PC-3 (cell line): ENCODE measurements at regions of chr7 and their contacts with region 1.

Region 1: DNA sequence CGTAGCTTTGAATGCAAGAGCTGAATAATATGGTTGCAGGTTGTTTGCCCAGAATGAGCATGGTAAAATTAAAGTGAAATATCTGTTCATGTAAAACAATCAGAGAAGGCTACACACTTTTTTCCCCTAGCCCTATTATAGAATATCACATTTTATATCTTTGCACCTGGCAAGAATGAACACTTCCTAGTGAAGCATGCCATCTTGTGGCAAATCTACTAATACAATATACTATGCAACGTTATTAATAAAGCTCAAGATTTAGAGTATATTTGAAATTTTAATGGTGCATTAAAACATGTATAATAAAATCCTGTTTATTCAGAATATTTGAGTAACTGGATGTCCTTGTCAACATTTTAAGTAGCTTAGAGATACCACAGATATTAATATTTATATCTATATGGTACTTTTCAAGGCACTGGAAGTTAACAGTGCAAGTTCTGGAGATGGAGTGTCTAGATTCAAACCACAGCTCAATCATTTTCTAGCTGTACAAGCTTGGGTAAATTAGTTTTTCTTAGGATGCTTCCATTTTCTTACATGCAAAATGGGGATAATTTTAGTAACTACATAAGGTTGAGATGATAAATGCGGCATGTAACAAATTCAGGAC is 643.1 kb upstream of the SEMA3D start:
- DNase-seq: peak; percentile 58
- ATAC-seq: peak; percentile 77
- H3K4me3 ChIP-seq: no peak overlapping the region
- H3K27ac ChIP-seq: no peak overlapping the region
- H3K4me1 ChIP-seq: no peaks in the 10 kb centered on the region
- H3K27me3 ChIP-seq: no peaks in the 10 kb centered on the region
- CTCF ChIP-seq: peak; percentile 72

Region 2: GRCh38 chr7:85030893-85031292 is 799.0 kb before region 1 on chr7:
- CTCF ChIA-PET with region 1: interaction called, 12 read pairs
- POLR2A ChIA-PET with region 1: no interaction called
- intact Hi-C with region 1: loop called (anchors 2 kb)
- DNase-seq: peak; percentile 74
- ATAC-seq: peak; percentile 92
- H3K4me3 ChIP-seq: no peak overlapping the region
- H3K27ac ChIP-seq: no peak overlapping the region
- H3K4me1 ChIP-seq: peaks cover 3% of the 10 kb centered on the region
- H3K27me3 ChIP-seq: no peaks in the 10 kb centered on the region
- CTCF ChIP-seq: peak; percentile 71

Region 3: GRCh38 chr7:85287106-85287825 is 542.7 kb before region 1 on chr7:
- CTCF ChIA-PET with region 1: no interaction called
- POLR2A ChIA-PET with region 1: no interaction called
- intact Hi-C with region 1: no loop called
- DNase-seq: no peak
- ATAC-seq: no peak
- H3K4me3 ChIP-seq: no peak overlapping the region
- H3K27ac ChIP-seq: no peak overlapping the region
- H3K4me1 ChIP-seq: no peaks in the 10 kb centered on the region
- H3K27me3 ChIP-seq: no peaks in the 10 kb centered on the region
- CTCF ChIP-seq: no peak

Region 4: DNA sequence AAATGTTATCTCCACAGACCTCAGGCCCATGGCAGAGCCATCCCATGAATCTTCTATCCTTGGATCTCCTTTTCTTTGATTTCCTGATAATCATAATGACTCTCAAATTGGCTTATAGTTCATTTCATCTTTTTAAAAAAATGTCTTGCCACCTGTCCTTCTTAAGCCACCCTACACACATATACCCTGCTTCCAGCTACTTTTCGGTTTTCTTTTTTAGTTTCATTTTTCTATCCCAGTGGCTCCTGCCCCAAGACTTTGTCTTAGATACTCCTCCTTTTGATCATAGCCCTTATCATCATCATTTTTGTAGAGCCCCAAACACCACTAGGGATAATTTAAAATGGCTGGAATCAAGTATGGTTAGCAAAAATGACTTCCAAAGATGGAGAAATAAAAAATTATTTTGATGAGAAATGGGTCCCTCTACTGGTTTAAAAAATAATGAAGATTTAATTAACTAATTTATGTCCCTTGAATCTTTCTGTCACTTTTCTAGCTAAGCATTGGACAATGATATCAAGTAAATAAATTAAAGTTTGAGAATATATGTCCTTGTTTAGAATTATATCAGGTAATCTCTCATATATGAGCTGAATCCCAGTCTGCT is 365.8 kb before region 1 on chr7:
- CTCF ChIA-PET with region 1: interaction called, 7 read pairs
- POLR2A ChIA-PET with region 1: no interaction called
- intact Hi-C with region 1: loop called (anchors 5 kb)
- DNase-seq: peak; percentile 36
- ATAC-seq: peak; percentile 22; the same call in 1 of the 2 replicates
- H3K4me3 ChIP-seq: no peak overlapping the region
- H3K27ac ChIP-seq: no peak overlapping the region
- H3K4me1 ChIP-seq: no peaks in the 10 kb centered on the region
- H3K27me3 ChIP-seq: no peaks in the 10 kb centered on the region
- CTCF ChIP-seq: peak; percentile 52

Region 5: GRCh38 chr7:85554236-85555178 is 275.4 kb before region 1 on chr7:
- CTCF ChIA-PET with region 1: no interaction called
- POLR2A ChIA-PET with region 1: no interaction called
- intact Hi-C with region 1: loop called (anchors 1 kb)
- DNase-seq: peak; percentile 82
- ATAC-seq: peak; percentile 57
- H3K4me3 ChIP-seq: no peak overlapping the region
- H3K27ac ChIP-seq: no peak overlapping the region
- H3K4me1 ChIP-seq: no peaks in the 10 kb centered on the region
- H3K27me3 ChIP-seq: no peaks in the 10 kb centered on the region
- CTCF ChIP-seq: peak; percentile 79

Region 6: GRCh38 chr7:85764034-85764433 is 65.9 kb before region 1 on chr7:
- CTCF ChIA-PET with region 1: no interaction called
- POLR2A ChIA-PET with region 1: no interaction called
- intact Hi-C with region 1: no loop called
- DNase-seq: no peak
- ATAC-seq: peak; percentile 33
- H3K4me3 ChIP-seq: no peak overlapping the region
- H3K27ac ChIP-seq: no peak overlapping the region
- H3K4me1 ChIP-seq: no peaks in the 10 kb centered on the region
- H3K27me3 ChIP-seq: no peaks in the 10 kb centered on the region
- CTCF ChIP-seq: no peak

Region 7: DNA sequence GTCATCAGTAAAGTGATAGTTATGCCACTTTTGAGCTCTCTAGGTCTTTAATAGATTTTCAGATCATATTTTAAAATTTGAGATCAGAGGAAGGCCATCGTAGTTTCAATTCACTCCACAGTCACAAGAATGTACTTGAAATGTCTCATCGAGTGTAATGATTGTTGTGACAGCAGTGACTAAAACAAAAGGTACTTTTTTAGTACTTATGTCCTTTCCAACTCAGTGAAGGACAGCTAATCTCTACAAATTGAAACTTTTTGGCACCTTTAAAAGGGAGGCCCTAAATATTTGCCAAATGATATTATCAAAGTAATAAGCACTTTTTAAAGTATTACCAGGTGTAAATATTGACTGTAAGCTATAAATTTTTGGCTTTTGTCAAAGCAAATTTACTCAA is 110.9 kb after region 1 on chr7:
- CTCF ChIA-PET with region 1: no interaction called
- POLR2A ChIA-PET with region 1: no interaction called
- intact Hi-C with region 1: no loop called
- DNase-seq: no peak
- ATAC-seq: no peak
- H3K4me3 ChIP-seq: no peak overlapping the region
- H3K27ac ChIP-seq: no peak overlapping the region
- H3K4me1 ChIP-seq: no peaks in the 10 kb centered on the region
- H3K27me3 ChIP-seq: no peaks in the 10 kb centered on the region
- CTCF ChIP-seq: no peak

Region 8: DNA sequence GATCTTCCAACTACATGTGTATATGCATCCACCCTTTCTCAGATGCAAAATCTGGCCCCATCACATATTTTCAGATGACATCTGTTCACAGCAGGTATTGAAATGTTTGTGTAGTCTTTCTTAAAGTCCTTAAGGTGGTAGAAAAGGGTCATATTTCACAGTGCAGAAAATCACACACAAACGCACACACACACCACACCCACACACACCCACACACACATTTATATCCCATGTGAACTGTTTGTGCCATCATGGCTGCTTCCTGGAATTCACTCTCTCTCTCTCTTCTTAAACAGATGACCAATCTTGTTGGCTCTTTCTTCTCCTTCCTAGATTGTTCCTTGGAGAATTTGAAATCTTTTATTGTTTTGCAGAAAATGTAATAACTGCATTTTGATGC is 150.8 kb after region 1 on chr7:
- CTCF ChIA-PET with region 1: no interaction called
- POLR2A ChIA-PET with region 1: no interaction called
- intact Hi-C with region 1: no loop called
- DNase-seq: no peak
- ATAC-seq: no peak
- H3K4me3 ChIP-seq: no peak overlapping the region
- H3K27ac ChIP-seq: no peak overlapping the region
- H3K4me1 ChIP-seq: no peaks in the 10 kb centered on the region
- H3K27me3 ChIP-seq: no peaks in the 10 kb centered on the region
- CTCF ChIP-seq: no peak